Activated B cell treated with CpG ODN at 0.5 μM for 24 hours (primary cell): ENCODE measurements at regions of chr2 and their contacts with region 1.

Region 1: DNA sequence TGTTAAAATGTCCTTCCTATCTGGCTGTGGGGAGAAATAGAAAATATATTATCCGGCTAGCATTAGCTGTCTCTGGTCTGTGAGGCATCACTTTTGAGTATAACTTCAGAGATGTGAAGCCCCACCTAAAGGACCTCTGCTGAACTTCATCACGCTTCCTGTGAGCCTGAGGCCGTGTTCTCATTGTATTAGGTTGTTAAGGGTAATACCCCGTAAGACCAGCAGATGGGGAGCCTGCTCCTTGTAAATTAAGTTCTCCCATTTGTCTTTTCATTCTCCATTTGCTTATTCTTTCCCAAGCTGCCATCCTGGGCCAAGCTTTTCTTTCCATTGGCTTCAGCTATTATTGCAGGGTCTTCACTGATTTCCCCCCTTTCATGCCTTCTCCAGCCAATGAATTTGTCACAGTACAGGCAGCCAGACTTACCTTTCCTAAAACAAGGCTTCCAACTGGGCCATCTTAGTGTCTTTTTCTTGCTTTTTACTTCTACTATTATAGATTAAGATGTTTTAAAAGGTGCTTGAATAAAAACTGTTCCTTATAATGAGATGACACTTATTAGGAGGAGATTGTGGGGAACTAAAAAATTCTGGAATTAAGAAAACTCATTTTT is 12.4 kb downstream of the NIF3L1 start:
- DNase-seq: no peak
- ATAC-seq: peak; percentile 100
- H3K4me3 Mint-ChIP-seq: no peak overlapping the region
- H3K27ac Mint-ChIP-seq: peak overlapping the region; percentile 38
- H3K4me1 Mint-ChIP-seq: peaks cover 4% of the 10 kb centered on the region
- H3K27me3 Mint-ChIP-seq: no peaks in the 10 kb centered on the region
- CTCF ChIP-seq: peak; percentile 30

Region 2: GRCh38 chr2:200578778-200579177 is 322.8 kb before region 1 on chr2:
- CTCF ChIA-PET with region 1: no interaction called
- POLR2A ChIA-PET with region 1: no interaction called
- intact Hi-C with region 1: loop called (anchors 1 kb)
- DNase-seq: no peak
- ATAC-seq: peak; percentile 42
- H3K4me3 Mint-ChIP-seq: no peak overlapping the region
- H3K27ac Mint-ChIP-seq: no peak overlapping the region
- H3K4me1 Mint-ChIP-seq: no peaks in the 10 kb centered on the region
- H3K27me3 Mint-ChIP-seq: peaks cover 2% of the 10 kb centered on the region
- CTCF ChIP-seq: no peak

Region 3: GRCh38 chr2:200888704-200889625 is 12.6 kb before region 1 on chr2 and contains the starts of genes NIF3L1 and PPIL3:
- CTCF ChIA-PET with region 1: interaction called, 6 read pairs
- POLR2A ChIA-PET with region 1: interaction called, 6 read pairs
- intact Hi-C with region 1: loop called (anchors 1 kb)
- DNase-seq: peak; percentile 90
- ATAC-seq: peak; percentile 80
- H3K4me3 Mint-ChIP-seq: peak within 1 kb of the TSS; percentile 99
- H3K27ac Mint-ChIP-seq: peak within 1 kb of the TSS; percentile 100
- H3K4me1 Mint-ChIP-seq: peaks cover 40% of the 10 kb centered on the region
- H3K27me3 Mint-ChIP-seq: no peaks in the 10 kb centered on the region
- CTCF ChIP-seq: no peak
- total RNA-seq, gene NIF3L1: 32.2 and 32.3 TPM in 2 replicates
- total RNA-seq, gene PPIL3: 43.5 and 52.5 TPM in 2 replicates

Region 4: DNA sequence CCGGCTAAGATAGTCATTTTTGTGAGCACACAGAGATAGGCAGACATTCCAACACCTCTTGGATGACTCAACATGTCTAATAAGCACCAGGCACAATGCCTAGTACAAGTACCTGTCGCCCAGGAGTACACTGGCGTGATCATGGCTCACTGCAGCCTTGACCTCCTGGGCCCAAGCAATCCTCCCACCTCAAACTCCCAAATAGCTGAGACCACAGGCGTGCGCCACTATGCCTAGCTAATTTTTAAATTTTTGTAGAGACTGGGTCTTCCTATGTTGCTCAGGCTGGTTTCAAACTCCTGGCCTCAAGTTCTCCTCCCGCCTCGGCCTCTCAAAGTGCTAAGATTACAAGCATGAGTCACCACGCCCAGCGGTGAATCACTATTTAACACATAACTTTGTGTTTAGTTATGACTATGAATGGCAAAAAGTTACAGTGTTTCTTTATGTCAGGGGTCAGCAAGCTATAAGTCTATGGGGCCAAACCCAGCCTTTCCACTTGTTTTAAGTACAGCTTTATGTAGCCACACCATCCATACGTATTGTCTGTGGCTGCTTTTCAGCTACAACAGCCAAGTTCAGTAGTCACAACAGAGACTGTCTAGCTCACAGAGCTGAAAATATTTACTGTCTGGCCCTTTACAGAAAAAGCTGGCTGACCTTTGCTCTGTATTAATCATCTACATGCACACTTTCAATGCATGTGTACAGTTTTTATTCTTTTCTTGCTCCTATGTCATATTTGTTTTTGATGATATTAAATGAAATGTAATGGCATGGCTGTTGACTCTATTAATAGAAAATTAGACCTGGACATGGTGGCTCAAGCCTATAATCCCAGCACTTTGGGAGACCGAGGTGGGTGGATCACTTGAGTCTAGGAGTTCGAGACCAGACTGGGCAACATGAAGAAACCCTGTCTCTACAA is 43.2 kb after region 1 on chr2:
- CTCF ChIA-PET with region 1: no interaction called
- POLR2A ChIA-PET with region 1: no interaction called
- intact Hi-C with region 1: loop called (anchors 5 kb)
- DNase-seq: no peak
- ATAC-seq: no peak
- H3K4me3 Mint-ChIP-seq: no peak overlapping the region
- H3K27ac Mint-ChIP-seq: no peak overlapping the region
- H3K4me1 Mint-ChIP-seq: no peaks in the 10 kb centered on the region
- H3K27me3 Mint-ChIP-seq: no peaks in the 10 kb centered on the region
- CTCF ChIP-seq: no peak

Region 5: GRCh38 chr2:201182650-201183364 is 281.2 kb after region 1 on chr2 and contains the start of gene CASP10:
- CTCF ChIA-PET with region 1: interaction called, 35 read pairs
- POLR2A ChIA-PET with region 1: interaction called, 4 read pairs
- intact Hi-C with region 1: no loop called
- DNase-seq: no peak
- ATAC-seq: peak; percentile 77
- H3K4me3 Mint-ChIP-seq: peak within 1 kb of the TSS; percentile 92
- H3K27ac Mint-ChIP-seq: peak within 1 kb of the TSS; percentile 83
- H3K4me1 Mint-ChIP-seq: peaks cover 48% of the 10 kb centered on the region
- H3K27me3 Mint-ChIP-seq: no peaks in the 10 kb centered on the region
- CTCF ChIP-seq: no peak
- total RNA-seq, gene CASP10: 9.5 and 13.8 TPM in 2 replicates

Region 6: DNA sequence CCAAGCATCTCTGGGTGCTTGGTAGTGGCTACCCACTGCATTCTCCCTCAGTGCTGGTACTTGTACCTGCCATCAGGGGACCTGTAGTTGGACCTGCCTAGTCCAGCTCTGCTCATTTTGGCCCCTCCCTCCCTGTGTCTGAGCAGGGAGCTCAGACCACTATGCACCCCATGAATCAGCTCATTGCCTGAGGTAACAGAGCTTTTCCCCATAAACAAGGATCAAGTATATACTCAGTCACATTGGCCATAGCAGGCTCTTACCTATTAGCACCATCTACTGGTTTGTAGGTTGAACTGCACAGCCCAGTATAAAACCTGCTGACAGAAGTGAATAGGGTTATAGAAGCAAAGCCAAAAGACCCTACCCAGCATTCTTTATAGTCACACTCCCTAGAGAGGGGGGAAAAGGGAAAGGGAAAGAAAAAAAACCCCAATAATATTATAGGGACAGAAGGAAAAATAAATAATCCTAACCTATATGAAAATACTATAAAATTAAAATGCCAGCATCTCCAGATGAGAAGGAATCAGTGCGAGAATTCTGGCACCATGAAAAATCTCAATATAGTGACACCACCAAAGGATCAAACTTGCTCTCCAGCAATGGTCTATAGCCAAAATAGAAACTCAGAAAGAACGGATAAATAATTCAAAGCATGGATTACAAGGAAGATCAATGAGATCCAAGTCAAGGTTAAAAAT is 462.4 kb after region 1 on chr2:
- CTCF ChIA-PET with region 1: no interaction called
- POLR2A ChIA-PET with region 1: no interaction called
- intact Hi-C with region 1: loop called (anchors 5 kb)
- DNase-seq: no peak
- ATAC-seq: peak; percentile 97
- H3K4me3 Mint-ChIP-seq: no peak overlapping the region
- H3K27ac Mint-ChIP-seq: peak overlapping the region; percentile 56
- H3K4me1 Mint-ChIP-seq: peaks cover 5% of the 10 kb centered on the region
- H3K27me3 Mint-ChIP-seq: no peaks in the 10 kb centered on the region
- CTCF ChIP-seq: peak; percentile 93

Region 7: GRCh38 chr2:201440182-201440581 is 538.6 kb after region 1 on chr2:
- CTCF ChIA-PET with region 1: no interaction called
- POLR2A ChIA-PET with region 1: no interaction called
- intact Hi-C with region 1: no loop called
- DNase-seq: no peak
- ATAC-seq: no peak
- H3K4me3 Mint-ChIP-seq: no peak overlapping the region
- H3K27ac Mint-ChIP-seq: no peak overlapping the region
- H3K4me1 Mint-ChIP-seq: peaks cover 43% of the 10 kb centered on the region
- H3K27me3 Mint-ChIP-seq: no peaks in the 10 kb centered on the region
- CTCF ChIP-seq: no peak